Endothelial cell of umbilical vein (primary cell): ENCODE measurements at regions of chr7 and their contacts with region 1.

Region 1: GRCh38 chr7:38369816-38370493 is 96.5 kb upstream of the TARP start:
- DNase-seq: peak; percentile 83
- H3K4me3 ChIP-seq: no peak overlapping the region
- H3K27ac ChIP-seq: peak overlapping the region; percentile 41
- H3K4me1 ChIP-seq: peaks cover 4% of the 10 kb centered on the region
- H3K27me3 ChIP-seq: no peaks in the 10 kb centered on the region
- CTCF ChIP-seq: peak; percentile 94 to 98
- POLR2A ChIP-seq: no peak

Region 2: DNA sequence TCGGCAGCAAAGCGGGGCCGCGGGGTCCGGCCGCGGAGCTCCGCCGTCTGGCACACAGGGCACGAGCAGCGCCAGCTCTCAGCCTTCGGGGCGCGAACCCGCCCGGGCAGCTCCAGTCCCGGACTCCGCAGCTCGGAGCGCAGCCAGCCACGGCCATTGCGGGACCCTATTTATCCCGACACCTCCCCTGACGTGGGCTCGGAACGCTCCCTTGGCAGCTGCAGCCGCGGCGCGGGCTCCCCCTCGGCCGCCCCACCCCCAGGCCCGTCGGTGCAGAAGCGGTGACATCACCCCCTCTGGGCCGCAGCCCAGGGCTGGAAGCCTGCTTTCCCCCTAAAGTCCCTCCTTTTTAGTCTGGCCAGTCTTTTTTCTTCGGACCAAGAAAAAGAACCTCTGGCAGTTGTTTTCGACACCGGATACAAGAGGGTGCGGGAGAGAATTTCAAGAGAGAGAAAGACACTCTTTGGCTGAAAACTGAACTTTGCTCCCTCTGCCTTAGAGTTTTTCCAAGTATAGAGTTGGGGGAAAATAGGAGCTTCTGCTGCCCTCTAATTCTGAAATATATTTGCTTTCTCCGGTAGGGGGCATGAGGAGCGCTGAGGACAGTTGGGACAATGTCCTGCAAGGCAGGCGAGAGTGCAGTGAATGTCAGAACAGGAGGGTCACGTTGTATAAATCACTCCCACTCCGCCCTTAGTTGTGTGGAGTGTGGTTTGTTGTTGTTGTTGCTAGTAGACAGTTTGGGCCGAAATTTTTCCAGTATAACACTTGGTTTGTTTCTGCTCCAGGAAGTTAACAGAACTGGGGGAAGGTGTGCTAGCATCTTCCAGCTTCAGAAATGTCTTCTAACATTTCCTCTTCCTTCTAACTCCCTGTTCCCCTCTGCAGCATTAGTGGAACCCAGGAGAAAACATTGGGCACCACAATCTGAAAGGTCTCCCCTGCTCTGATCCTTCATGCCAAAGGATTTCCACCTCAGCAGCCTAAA is 453.0 kb before region 1 on chr7 and contains the start of gene SFRP4:
- CTCF ChIA-PET with region 1: interaction called, 14 read pairs
- POLR2A ChIA-PET with region 1: no interaction called
- dilution Hi-C with region 1: no loop called
- intact Hi-C with region 1: no loop called
- DNase-seq: peak; percentile 56
- H3K4me3 ChIP-seq: peak within 1 kb of the TSS in 1 of 3 experiments; percentile 20
- H3K27ac ChIP-seq: no peak within 1 kb of the TSS
- H3K4me1 ChIP-seq: peaks cover 4% of the 10 kb centered on the region
- H3K27me3 ChIP-seq: peaks cover 31 to 42% of the 10 kb centered on the region in 2 experiments
- CTCF ChIP-seq: peak; percentile 54 to 66
- POLR2A ChIP-seq: no peak
- total RNA-seq, gene SFRP4: not detected in 2 replicates

Region 3: DNA sequence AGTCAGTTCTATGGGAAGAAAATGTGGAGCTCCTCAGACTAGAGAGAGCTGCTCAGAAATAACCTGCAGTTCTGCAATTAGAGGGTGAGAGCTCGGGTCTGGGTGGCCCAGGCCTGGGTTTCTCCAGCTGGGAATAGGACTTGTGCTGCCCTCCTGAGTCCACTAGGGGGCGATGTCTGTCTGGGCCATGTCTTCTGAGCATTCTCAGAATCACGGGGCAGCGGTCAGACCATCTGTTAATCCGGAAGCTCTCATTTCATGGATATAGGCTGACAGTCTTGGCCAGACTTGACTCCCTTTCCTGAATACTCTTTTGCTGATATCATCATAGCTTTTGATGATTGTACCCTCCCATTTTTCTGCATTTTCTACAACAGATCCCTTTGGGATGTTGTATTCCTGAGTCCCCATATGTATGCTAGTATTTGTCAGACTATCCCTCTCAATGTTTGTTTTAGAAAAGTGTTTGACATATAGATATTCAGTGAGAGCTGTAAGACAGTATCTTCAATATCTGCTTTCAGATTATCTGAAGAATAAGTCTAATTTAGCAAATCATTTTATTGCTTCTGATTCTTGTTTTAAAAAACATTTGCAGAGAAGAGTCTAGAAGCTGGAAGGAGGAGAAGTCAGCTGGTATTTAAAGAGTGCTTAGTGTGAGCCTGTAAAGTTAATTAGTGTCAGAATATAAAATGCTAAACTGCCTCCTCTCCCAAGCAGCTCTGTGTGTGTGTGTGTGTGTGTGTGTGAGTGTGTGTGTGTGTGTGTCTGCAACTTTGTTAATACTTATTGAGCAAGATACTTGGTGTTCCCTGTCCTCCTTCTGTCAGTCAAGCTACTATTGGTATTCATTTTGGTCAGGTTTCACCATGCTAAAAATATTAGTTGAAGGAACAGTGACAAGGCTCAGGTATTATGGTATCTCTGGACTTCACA is 154.0 kb before region 1 on chr7:
- CTCF ChIA-PET with region 1: interaction called, 29 read pairs
- POLR2A ChIA-PET with region 1: no interaction called
- dilution Hi-C with region 1: no loop called
- intact Hi-C with region 1: loop called (anchors 2 kb)
- DNase-seq: peak; percentile 88
- H3K4me3 ChIP-seq: no peak overlapping the region
- H3K27ac ChIP-seq: peak overlapping the region; percentile 43
- H3K4me1 ChIP-seq: peaks cover 13% of the 10 kb centered on the region
- H3K27me3 ChIP-seq: no peaks in the 10 kb centered on the region
- CTCF ChIP-seq: peak; percentile 98 to 99
- POLR2A ChIP-seq: no peak

Region 4: GRCh38 chr7:38262545-38262944 is 107.4 kb before region 1 on chr7:
- CTCF ChIA-PET with region 1: no interaction called
- POLR2A ChIA-PET with region 1: no interaction called
- dilution Hi-C with region 1: no loop called
- intact Hi-C with region 1: no loop called
- DNase-seq: no peak
- H3K4me3 ChIP-seq: no peak overlapping the region
- H3K27ac ChIP-seq: no peak overlapping the region
- H3K4me1 ChIP-seq: no peaks in the 10 kb centered on the region
- H3K27me3 ChIP-seq: no peaks in the 10 kb centered on the region
- CTCF ChIP-seq: no peak
- POLR2A ChIP-seq: no peak

Region 5: DNA sequence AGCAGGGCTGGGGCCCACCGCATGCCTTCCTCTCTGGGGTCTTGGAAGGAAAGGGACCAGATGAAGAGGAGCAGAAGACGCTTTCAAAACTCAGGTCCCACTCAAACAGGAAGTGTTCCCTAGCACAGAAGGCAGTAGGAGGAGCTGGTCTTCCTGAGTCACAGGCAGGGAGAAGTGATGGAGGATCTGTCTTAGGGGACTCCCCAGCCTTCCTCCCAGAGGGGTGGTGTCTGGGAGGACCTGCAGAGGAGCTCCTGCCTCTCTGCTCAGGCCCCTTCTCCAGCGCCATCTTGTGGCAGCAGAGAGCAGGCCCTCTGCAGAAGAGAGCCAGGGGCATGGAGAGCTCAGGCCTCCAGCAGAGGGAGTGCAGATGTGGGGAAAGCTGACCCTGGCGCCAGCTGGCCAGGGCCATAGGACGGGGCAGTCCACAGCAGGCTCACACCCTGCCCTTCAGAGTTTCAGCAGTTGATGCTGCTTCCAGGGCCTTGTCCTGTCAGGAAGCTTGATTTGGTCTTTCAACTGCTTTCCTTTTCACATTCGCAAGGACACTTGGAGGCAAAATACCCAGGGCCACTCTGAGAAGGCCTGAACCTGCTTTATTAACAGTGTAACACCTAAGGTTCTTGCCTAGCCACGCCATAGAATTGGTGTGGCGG is 34.3 kb before region 1 on chr7:
- CTCF ChIA-PET with region 1: interaction called, 80 read pairs
- POLR2A ChIA-PET with region 1: no interaction called
- dilution Hi-C with region 1: no loop called
- intact Hi-C with region 1: loop called (anchors 1 kb)
- DNase-seq: peak; percentile 82
- H3K4me3 ChIP-seq: no peak overlapping the region
- H3K27ac ChIP-seq: no peak overlapping the region
- H3K4me1 ChIP-seq: no peaks in the 10 kb centered on the region
- H3K27me3 ChIP-seq: no peaks in the 10 kb centered on the region
- CTCF ChIP-seq: peak; percentile 98 to 100
- POLR2A ChIP-seq: no peak

Region 6: GRCh38 chr7:38382684-38383083 is 12.7 kb after region 1 on chr7:
- CTCF ChIA-PET with region 1: interaction called, 111 read pairs
- POLR2A ChIA-PET with region 1: no interaction called
- dilution Hi-C with region 1: no loop called
- intact Hi-C with region 1: loop called (anchors 1 kb)
- DNase-seq: peak; percentile 76
- H3K4me3 ChIP-seq: no peak overlapping the region
- H3K27ac ChIP-seq: peak overlapping the region; percentile 75
- H3K4me1 ChIP-seq: peaks cover 50% of the 10 kb centered on the region
- H3K27me3 ChIP-seq: no peaks in the 10 kb centered on the region
- CTCF ChIP-seq: no peak
- POLR2A ChIP-seq: no peak

Region 7: GRCh38 chr7:38398725-38399321 is 28.9 kb after region 1 on chr7:
- CTCF ChIA-PET with region 1: interaction called, 21 read pairs
- POLR2A ChIA-PET with region 1: no interaction called
- dilution Hi-C with region 1: no loop called
- intact Hi-C with region 1: no loop called
- DNase-seq: peak; percentile 60
- H3K4me3 ChIP-seq: no peak overlapping the region
- H3K27ac ChIP-seq: no peak overlapping the region
- H3K4me1 ChIP-seq: no peaks in the 10 kb centered on the region
- H3K27me3 ChIP-seq: no peaks in the 10 kb centered on the region
- CTCF ChIP-seq: peak; percentile 83 to 89
- POLR2A ChIP-seq: no peak

Region 8: GRCh38 chr7:38600746-38601145 is 230.8 kb after region 1 on chr7:
- CTCF ChIA-PET with region 1: no interaction called
- POLR2A ChIA-PET with region 1: no interaction called
- dilution Hi-C with region 1: no loop called
- intact Hi-C with region 1: no loop called
- DNase-seq: no peak
- H3K4me3 ChIP-seq: no peak overlapping the region
- H3K27ac ChIP-seq: no peak overlapping the region
- H3K4me1 ChIP-seq: no peaks in the 10 kb centered on the region
- H3K27me3 ChIP-seq: no peaks in the 10 kb centered on the region
- CTCF ChIP-seq: no peak
- POLR2A ChIP-seq: no peak